ENCODE measurements at regions of chr4 and their contacts with region 1.

Region 1: GRCh38 chr4:139656614-139657486 is 8.8 kb upstream of the MGST2 start:
- DNase-seq: peak; percentile 80
- ATAC-seq: peak; percentile 87
- H3K4me3 ChIP-seq: peak overlapping the region; percentile 53; the same call in 1 of the 2 replicates
- H3K27ac ChIP-seq: 0 out of 2 replicates have a peak overlapping the region, but pooled peaks have one; percentile 30
- H3K4me1 ChIP-seq: peaks cover 14% of the 10 kb centered on the region
- H3K27me3 ChIP-seq: no peaks in the 10 kb centered on the region
- CTCF ChIP-seq: peak; percentile 72

Region 2: DNA sequence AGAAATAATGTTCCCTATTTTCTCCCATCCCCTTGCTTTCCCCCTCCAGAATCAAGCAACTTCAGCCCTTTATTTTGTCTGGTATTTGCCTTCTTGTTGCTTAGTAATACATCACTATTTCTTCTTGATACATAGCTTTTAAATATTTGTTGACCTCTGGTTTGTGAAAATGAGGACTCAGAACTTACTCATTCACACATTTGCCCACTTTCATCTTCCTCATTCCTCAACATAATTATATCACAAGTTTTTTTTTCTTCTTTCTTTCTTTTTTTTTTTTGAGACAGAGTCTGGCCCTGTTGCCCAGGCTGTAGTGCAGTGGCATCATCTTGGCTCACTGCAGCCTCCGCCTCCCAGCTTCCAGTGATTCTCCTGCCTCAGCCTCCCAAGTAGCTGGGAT is 325.7 kb before region 1 on chr4:
- CTCF ChIA-PET with region 1: no interaction called
- POLR2A ChIA-PET with region 1: no interaction called
- intact Hi-C with region 1: no loop called
- DNase-seq: no peak
- ATAC-seq: no peak
- H3K4me3 ChIP-seq: no peak overlapping the region
- H3K27ac ChIP-seq: no peak overlapping the region
- H3K4me1 ChIP-seq: no peaks in the 10 kb centered on the region
- H3K27me3 ChIP-seq: no peaks in the 10 kb centered on the region
- CTCF ChIP-seq: no peak

Region 3: GRCh38 chr4:139603576-139604387 is 53.1 kb before region 1 on chr4:
- CTCF ChIA-PET with region 1: interaction called, 10 read pairs
- POLR2A ChIA-PET with region 1: interaction called, 3 read pairs
- intact Hi-C with region 1: no loop called
- DNase-seq: peak; percentile 73
- ATAC-seq: peak; percentile 20; the same call in 1 of the 2 replicates
- H3K4me3 ChIP-seq: no peak overlapping the region
- H3K27ac ChIP-seq: no peak overlapping the region
- H3K4me1 ChIP-seq: peaks cover 30% of the 10 kb centered on the region
- H3K27me3 ChIP-seq: no peaks in the 10 kb centered on the region
- CTCF ChIP-seq: peak; percentile 75

Region 4: DNA sequence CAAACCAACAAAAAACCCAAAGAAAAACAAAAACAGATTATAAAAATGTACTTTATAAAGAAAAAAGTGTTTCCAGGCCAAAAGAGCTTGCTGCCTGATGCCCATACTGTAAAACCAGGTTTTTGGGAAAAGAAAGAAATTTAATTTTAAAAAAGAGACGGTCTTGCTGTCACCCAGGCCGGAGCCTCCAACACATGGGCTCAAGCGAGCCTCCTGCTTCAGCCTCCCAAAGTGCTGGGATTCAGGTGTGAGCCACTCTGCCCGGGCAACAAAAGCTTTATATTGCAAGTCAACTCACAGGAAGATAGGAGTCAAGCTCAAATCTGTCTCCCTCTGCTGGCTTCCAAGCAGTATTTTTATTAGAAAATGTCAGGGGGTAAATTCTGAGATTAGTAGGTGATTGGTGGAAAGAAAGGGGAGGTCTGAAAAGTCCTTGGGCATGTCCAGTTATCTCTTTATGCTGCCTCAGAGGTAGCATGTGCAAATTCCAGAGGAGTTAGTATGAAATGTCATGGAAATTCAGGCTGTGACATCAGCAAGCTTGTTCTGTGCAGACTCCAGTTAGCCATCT is 48.1 kb after region 1 on chr4:
- CTCF ChIA-PET with region 1: no interaction called
- POLR2A ChIA-PET with region 1: no interaction called
- intact Hi-C with region 1: loop called (anchors 5 kb)
- DNase-seq: peak; percentile 10
- ATAC-seq: no peak
- H3K4me3 ChIP-seq: no peak overlapping the region
- H3K27ac ChIP-seq: no peak overlapping the region
- H3K4me1 ChIP-seq: no peaks in the 10 kb centered on the region
- H3K27me3 ChIP-seq: no peaks in the 10 kb centered on the region
- CTCF ChIP-seq: peak; percentile 51; the same call in 1 of the 2 replicates

Region 5: DNA sequence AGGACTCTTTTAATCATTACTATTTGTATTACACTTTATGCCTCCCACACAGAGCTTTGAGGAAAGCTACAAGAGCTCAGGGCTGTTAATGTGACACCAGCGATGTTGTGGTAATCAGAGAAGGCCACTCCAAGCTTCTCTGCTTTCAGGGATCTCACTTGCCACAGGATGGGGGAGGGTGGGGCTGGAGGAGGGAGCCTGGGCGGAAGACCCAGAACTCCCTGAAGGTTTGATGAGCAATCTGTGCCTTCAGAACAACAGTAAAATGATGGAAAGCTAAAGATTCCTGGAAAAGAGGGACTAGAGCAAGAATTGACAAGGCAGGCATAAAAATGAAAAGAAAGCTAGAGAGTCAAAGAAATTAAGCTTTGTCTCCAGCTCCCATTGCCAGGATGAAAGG is 421.5 kb after region 1 on chr4:
- CTCF ChIA-PET with region 1: no interaction called
- POLR2A ChIA-PET with region 1: no interaction called
- intact Hi-C with region 1: no loop called
- DNase-seq: no peak
- ATAC-seq: no peak
- H3K4me3 ChIP-seq: no peak overlapping the region
- H3K27ac ChIP-seq: no peak overlapping the region
- H3K4me1 ChIP-seq: peaks cover 3% of the 10 kb centered on the region; the same call in 1 of the 2 replicates
- H3K27me3 ChIP-seq: no peaks in the 10 kb centered on the region
- CTCF ChIP-seq: no peak

Measured in PC-3 (cell line).